Endothelial cell of umbilical vein (primary cell): ENCODE measurements at regions of chr11 and their contacts with region 1.

Region 1: DNA sequence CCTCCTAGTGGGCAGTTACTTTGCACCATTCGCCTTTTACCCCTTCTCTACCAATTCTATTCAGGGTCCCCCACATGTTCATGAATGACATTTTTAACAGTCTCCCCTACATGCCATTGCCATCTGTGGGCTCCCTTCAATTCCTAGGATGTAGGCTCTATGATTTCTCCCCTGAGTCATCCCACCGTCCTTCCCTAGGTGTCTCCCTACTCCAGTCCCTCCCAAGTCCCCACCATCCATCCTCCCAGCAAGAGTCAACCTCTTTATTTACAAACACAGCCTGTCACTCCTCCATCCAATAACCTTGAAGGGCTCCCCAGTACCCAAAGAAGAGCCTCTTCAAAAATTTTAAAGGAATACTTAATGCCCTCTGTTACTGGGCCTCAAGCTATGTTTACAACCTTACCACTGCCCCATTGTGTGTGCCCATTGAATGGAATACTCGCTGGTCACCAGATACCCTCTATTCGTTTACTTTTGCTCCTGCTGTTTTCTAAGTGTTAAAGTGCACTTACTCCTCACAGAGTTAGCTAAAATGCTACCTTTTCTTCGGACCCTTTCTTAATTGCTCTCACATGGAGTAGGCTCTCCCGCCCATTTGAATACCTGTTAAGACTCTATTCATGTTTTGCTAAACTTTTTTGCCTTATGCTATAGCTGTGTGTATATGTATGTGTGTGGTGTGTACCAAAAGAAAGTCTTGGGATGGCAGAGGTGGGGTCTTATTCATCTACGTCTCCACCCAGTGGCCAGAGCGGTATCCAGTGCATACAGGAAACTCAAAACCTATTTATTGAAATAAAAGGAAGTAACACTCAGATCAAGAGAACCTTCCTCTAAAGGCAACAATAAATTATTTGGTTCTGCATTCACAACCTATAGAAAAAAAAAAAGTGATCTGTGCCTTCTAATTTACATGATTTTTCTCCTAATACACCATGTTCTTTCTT is 235.8 kb upstream of the CCDC90B start:
- DNase-seq: no peak
- H3K4me3 ChIP-seq: no peak overlapping the region
- H3K27ac ChIP-seq: no peak overlapping the region
- H3K4me1 ChIP-seq: no peaks in the 10 kb centered on the region
- H3K27me3 ChIP-seq: no peaks in the 10 kb centered on the region
- CTCF ChIP-seq: no peak
- POLR2A ChIP-seq: no peak

Region 2: GRCh38 chr11:83724008-83724461 is 202.1 kb after region 1 on chr11:
- CTCF ChIA-PET with region 1: interaction called, 3 read pairs
- POLR2A ChIA-PET with region 1: no interaction called
- dilution Hi-C with region 1: no loop called
- intact Hi-C with region 1: loop called (anchors 2 kb)
- DNase-seq: peak; percentile 65
- H3K4me3 ChIP-seq: peak overlapping the region in 2 of 3 experiments; percentile 23 to 34
- H3K27ac ChIP-seq: no peak overlapping the region
- H3K4me1 ChIP-seq: no peaks in the 10 kb centered on the region
- H3K27me3 ChIP-seq: peaks cover 12 to 17% of the 10 kb centered on the region in 2 experiments
- CTCF ChIP-seq: no peak
- POLR2A ChIP-seq: no peak